ENCODE measurements at regions of chr10 and their contacts with region 1.

Region 1: DNA sequence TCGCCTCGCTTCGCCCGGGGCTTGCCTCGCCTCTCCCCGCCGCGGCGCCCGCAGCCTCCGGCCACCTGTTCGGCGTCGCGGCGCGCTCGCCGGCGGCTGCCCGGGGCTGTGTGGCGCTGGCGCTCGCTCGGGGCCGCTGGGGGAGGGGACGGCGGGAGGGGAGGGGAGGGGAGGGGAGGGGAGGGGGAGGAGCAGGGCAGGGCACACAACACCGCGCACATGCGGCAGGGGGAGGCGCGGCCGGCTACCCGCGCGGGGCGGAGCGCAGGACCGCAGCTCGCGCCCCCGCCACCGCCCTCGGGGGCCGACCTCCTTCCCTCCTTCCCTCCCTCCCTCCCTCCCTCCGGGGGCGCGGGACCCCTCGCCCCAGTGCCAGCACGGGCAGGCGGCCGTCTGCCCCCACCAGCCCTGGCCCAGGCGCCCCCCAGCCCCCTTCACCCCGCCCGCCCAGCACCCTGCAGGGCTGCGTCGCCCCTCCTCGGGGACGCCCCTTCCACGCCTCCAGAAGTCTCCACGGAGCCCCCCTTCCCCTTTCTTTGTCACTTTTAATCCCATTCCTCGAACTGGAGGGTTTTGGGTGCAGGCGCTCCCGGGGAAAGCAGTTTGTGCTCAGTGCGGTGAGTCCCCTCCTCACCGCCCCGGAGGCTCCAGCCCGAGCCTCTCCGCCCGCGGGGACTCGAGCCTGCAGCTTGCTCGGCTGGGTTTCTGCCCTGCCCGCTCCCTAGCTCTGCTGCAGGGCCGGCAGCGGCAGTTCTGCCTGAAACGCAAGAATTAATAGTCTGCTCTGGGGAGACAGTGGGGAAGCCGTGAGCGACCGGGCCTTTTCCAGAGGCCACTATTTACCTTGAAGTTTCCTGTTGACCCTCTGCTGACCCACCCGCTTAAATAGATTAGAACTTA is at the start of gene PARD3:
- DNase-seq: peak; percentile 42
- H3K4me3 ChIP-seq: peak within 1 kb of the TSS; percentile 81 to 94 (median 85)
- H3K27ac ChIP-seq: peak within 1 kb of the TSS; percentile 57
- H3K4me1 ChIP-seq: peaks cover 26% of the 10 kb centered on the region
- H3K27me3 ChIP-seq: no peaks in the 10 kb centered on the region
- CTCF ChIP-seq: no peak
- total RNA-seq, gene PARD3: 47.1 to 58.7 TPM

Region 2: DNA sequence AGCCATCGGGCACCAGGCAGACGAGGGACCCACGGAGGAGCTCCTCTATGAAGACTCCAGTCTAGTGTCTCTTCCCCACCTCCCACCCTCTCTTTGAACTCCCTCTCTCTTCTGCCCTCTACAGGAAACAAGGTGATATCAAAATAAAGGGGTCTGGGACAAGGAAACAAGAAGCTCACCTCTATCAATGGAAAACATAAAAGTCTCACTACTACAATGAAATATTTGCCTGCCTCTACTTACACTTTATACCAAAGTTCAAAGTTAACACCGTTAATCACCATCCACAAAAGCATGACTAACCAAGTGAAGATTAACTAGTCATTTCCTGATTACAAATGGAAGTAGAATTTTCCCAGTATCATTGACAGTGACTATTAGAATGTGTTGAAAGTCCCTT is 82.5 kb before region 1 on chr10:
- CTCF ChIA-PET with region 1: no interaction called
- dilution Hi-C with region 1: loop called (anchors 5 kb)
- in situ Hi-C with region 1: no loop called
- intact Hi-C with region 1: loop called (anchors 2 kb)
- DNase-seq: peak; percentile 77
- H3K4me3 ChIP-seq: no peak overlapping the region
- H3K27ac ChIP-seq: peak overlapping the region; percentile 75
- H3K4me1 ChIP-seq: peaks cover 31% of the 10 kb centered on the region
- H3K27me3 ChIP-seq: no peaks in the 10 kb centered on the region
- CTCF ChIP-seq: no peak

Region 3: DNA sequence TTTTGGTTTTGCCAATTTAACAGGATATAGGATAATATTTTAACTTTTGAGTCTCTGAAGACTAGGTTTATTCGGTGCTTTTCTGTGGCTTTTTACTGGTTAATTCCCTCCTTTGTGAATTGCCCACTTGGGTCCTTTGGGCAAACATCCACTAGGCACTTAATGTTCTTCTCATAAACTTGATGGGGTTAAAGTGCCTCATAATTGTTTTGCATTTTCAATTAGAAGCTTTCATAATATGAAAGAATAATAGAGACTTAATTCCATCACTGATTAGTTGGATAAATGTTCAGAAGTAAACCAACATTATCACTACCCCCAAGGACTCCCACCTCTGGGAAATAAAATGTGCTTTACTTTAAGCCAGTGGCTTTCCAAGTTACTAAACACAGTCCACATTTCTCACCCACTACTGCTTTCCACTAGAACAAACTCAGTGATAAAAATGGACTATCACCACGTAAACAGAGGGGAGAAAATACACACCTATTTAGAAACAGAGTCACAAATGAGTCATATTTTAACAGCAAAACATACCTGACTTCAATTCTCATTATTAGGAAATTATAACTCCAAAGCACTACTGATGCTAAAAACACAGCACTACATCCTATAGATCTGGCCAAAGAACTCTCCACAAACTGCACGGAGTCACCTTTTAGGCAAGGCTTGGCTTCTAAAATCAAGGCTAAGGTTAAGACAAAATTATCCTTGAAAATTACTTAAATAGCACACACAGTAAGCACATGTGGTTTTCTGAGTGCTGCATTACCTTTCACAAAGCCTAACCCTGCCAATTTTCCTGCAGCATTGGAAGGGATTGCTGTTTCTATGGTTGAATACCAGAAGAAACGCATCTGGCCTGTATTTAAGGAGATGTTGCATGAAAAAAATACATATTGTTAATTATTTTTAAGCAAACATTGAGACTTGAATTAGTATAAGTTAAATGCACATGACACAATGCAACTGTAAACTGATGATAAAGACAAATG is 41.5 kb before region 1 on chr10:
- CTCF ChIA-PET with region 1: no interaction called
- dilution Hi-C with region 1: no loop called
- in situ Hi-C with region 1: no loop called
- intact Hi-C with region 1: loop called (anchors 5 kb)
- DNase-seq: no peak
- H3K4me3 ChIP-seq: no peak overlapping the region
- H3K27ac ChIP-seq: no peak overlapping the region
- H3K4me1 ChIP-seq: peaks cover 52% of the 10 kb centered on the region
- H3K27me3 ChIP-seq: no peaks in the 10 kb centered on the region
- CTCF ChIP-seq: no peak

Region 4: DNA sequence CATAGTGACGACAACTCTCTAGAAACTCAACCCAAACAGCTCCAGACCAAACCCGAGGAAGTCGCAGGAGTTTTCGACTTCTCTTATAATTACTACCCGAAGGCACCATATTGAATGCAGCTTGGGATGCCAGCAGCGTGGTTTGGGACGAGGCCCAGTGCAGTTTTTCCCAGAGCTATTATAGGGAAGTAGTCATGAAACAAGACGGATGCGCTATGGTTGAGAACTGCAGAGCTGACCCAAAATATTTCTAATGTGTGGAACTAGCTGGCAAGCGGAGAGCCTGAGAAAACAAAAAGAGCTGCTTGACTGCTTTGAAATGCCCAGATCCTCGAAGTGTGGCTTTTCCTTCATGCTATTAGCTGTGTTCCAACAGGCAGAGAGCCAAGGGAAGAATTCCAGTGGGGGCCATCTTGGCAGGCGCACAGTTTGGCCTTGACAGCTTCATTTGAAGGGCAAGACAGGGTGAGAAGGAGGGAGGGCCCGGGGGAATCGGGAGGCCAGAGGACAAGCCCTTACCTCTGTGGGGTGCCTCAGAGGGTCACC is 152.0 kb after region 1 on chr10:
- CTCF ChIA-PET with region 1: no interaction called
- dilution Hi-C with region 1: no loop called
- in situ Hi-C with region 1: no loop called
- intact Hi-C with region 1: loop called (anchors 2 kb)
- DNase-seq: no peak
- H3K4me3 ChIP-seq: no peak overlapping the region
- H3K27ac ChIP-seq: no peak overlapping the region
- H3K4me1 ChIP-seq: no peaks in the 10 kb centered on the region
- H3K27me3 ChIP-seq: no peaks in the 10 kb centered on the region
- CTCF ChIP-seq: no peak

Measured in mammary epithelial cell (primary cell).